Activated B cell treated with CpG ODN at 0.5 μM for 24 hours (primary cell): ENCODE measurements at regions of chr12 and their contacts with region 1.

Region 1: GRCh38 chr12:3288690-3289089 is 202.3 kb upstream of the PRMT8 start:
- DNase-seq: no peak
- ATAC-seq: no peak
- H3K4me3 Mint-ChIP-seq: no peak overlapping the region
- H3K27ac Mint-ChIP-seq: no peak overlapping the region
- H3K4me1 Mint-ChIP-seq: no peaks in the 10 kb centered on the region
- H3K27me3 Mint-ChIP-seq: peaks cover 8% of the 10 kb centered on the region
- CTCF ChIP-seq: no peak

Region 2: GRCh38 chr12:3307389-3307788 is 18.7 kb after region 1 on chr12:
- CTCF ChIA-PET with region 1: no interaction called
- POLR2A ChIA-PET with region 1: no interaction called
- intact Hi-C with region 1: loop called (anchors 2 kb)
- DNase-seq: no peak
- ATAC-seq: no peak
- H3K4me3 Mint-ChIP-seq: no peak overlapping the region
- H3K27ac Mint-ChIP-seq: no peak overlapping the region
- H3K4me1 Mint-ChIP-seq: no peaks in the 10 kb centered on the region
- H3K27me3 Mint-ChIP-seq: peaks cover 22% of the 10 kb centered on the region
- CTCF ChIP-seq: no peak

Region 3: GRCh38 chr12:3418609-3419390 is 130.1 kb after region 1 on chr12:
- CTCF ChIA-PET with region 1: no interaction called
- POLR2A ChIA-PET with region 1: no interaction called
- intact Hi-C with region 1: no loop called
- DNase-seq: no peak
- ATAC-seq: no peak
- H3K4me3 Mint-ChIP-seq: no peak overlapping the region
- H3K27ac Mint-ChIP-seq: no peak overlapping the region
- H3K4me1 Mint-ChIP-seq: no peaks in the 10 kb centered on the region
- H3K27me3 Mint-ChIP-seq: peaks cover 20% of the 10 kb centered on the region
- CTCF ChIP-seq: no peak